CD14-positive monocyte (primary cell): ENCODE measurements at regions of chr5 and their contacts with region 1.

Region 1: GRCh38 chr5:61177716-61178115 is 15.4 kb upstream of the SMIM15 start:
- DNase-seq: no peak
- H3K4me3 ChIP-seq: no peak overlapping the region
- H3K4me3 Mint-ChIP-seq: no peak overlapping the region
- H3K27ac ChIP-seq: no peak overlapping the region
- H3K27ac Mint-ChIP-seq: peak overlapping the region in 4 of 7 donors; percentile 8 to 76 (median 36)
- H3K4me1 ChIP-seq: peaks cover 7 to 30% of the 10 kb centered on the region in 2 donors
- H3K4me1 Mint-ChIP-seq: peaks cover 30% of the 10 kb centered on the region
- H3K27me3 ChIP-seq: no peaks in the 10 kb centered on the region
- H3K27me3 Mint-ChIP-seq: no peaks in the 10 kb centered on the region
- CTCF ChIP-seq: no peak

Region 2: DNA sequence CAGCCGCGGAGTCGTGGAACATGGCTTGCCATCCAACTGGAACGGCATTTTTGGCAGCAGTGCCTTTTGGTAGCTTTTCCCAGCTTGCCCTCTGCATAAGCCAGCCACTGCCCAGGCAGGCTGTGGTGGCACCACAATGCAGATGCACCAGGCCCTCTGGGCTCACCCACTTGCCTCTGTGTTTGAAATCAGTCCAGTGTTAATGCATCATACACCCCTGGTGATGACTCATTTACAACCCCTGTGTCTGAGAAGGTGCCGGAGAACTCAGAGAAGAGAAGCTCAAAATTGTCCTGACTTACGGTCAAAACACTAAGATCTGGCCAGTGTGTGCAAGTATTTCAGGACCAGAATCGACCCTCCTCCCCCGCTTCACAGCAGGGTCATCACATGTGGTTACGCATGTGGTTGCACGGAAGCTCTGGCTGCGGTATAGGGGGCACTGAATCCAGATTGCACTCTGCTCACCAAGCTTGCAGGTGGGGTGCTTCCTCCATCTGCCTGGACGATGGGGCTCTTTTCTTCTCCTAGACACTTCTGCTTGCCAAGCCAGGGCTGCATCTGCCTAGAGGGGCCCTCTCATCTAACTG is 51.1 kb after region 1 on chr5:
- intact Hi-C with region 1: no loop called
- DNase-seq: no peak
- H3K4me3 ChIP-seq: no peak overlapping the region
- H3K4me3 Mint-ChIP-seq: peak overlapping the region in 1 of 2 donors; percentile 35
- H3K27ac ChIP-seq: no peak overlapping the region
- H3K27ac Mint-ChIP-seq: no peak overlapping the region
- H3K4me1 ChIP-seq: no peaks in the 10 kb centered on the region
- H3K4me1 Mint-ChIP-seq: peaks cover 11% of the 10 kb centered on the region
- H3K27me3 ChIP-seq: no peaks in the 10 kb centered on the region
- H3K27me3 Mint-ChIP-seq: peaks cover 0 to 5% (median 5%) of the 10 kb centered on the region in 3 donors
- CTCF ChIP-seq: no peak

Region 3: GRCh38 chr5:61301341-61302199 is 123.9 kb after region 1 on chr5:
- intact Hi-C with region 1: loop called in 1 of 2 experiments (anchors 10 kb)
- DNase-seq: peak in 1 of 3 donors; percentile 34
- H3K4me3 ChIP-seq: no peak overlapping the region
- H3K4me3 Mint-ChIP-seq: no peak overlapping the region
- H3K27ac ChIP-seq: no peak overlapping the region
- H3K27ac Mint-ChIP-seq: no peak overlapping the region
- H3K4me1 ChIP-seq: peaks cover 13 to 33% of the 10 kb centered on the region in 2 donors
- H3K4me1 Mint-ChIP-seq: peaks cover 43% of the 10 kb centered on the region
- H3K27me3 ChIP-seq: no peaks in the 10 kb centered on the region
- H3K27me3 Mint-ChIP-seq: peaks cover 0 to 1% (median 0%) of the 10 kb centered on the region in 3 donors
- CTCF ChIP-seq: no peak